ENCODE measurements at regions of chr6 and their contacts with region 1.

Region 1: GRCh38 chr6:134174672-134175198 is 122.3 kb upstream of the SLC2A12 start:
- DNase-seq: peak; percentile 97 to 98 (median 97)
- ATAC-seq: peak; percentile 73 to 90 (median 84)
- H3K4me3 ChIP-seq: peak overlapping the region; percentile 78 to 93 (median 83)
- H3K27ac ChIP-seq: peak overlapping the region; percentile 98 to 99 (median 98)
- H3K4me1 ChIP-seq: peaks cover 0 to 43% (median 14%) of the 10 kb centered on the region in 4 donors
- H3K27me3 ChIP-seq: no peaks in the 10 kb centered on the region
- CTCF ChIP-seq: peak in 1 of 4 donors; percentile 13
- POLR2A ChIP-seq: peak; percentile 99

Region 2: DNA sequence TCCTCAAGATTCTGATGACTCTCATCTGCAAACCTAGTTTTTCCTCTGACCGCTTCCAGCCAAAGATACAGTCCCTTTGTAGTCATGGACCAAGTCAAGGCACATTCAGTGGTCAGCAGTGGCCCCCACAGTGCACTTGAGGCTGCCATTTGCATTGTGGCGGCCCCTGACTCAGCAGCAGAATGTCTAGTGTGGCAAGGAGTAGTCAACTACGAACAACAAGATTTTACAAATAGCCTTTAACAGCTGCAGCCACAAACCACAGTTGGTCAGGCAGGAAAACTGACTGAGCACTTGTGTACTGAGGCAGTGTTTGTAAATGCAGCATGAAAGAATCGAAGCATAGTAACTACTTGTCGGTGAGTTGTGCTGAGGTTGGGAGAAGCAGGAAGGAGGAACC is 171.9 kb before region 1 on chr6:
- intact Hi-C with region 1: no loop called
- DNase-seq: no peak
- ATAC-seq: no peak
- H3K4me3 ChIP-seq: no peak overlapping the region
- H3K27ac ChIP-seq: no peak overlapping the region
- H3K4me1 ChIP-seq: peaks cover 0 to 33% (median 6%) of the 10 kb centered on the region in 4 donors
- H3K27me3 ChIP-seq: no peaks in the 10 kb centered on the region
- CTCF ChIP-seq: no peak
- POLR2A ChIP-seq: no peak

Region 3: GRCh38 chr6:134517145-134517658 is 342.5 kb after region 1 on chr6:
- intact Hi-C with region 1: loop called in 1 of 2 experiments (anchors 10 kb)
- DNase-seq: peak; percentile 92 to 94 (median 94)
- ATAC-seq: peak; percentile 76 to 89 (median 84)
- H3K4me3 ChIP-seq: no peak overlapping the region
- H3K27ac ChIP-seq: peak overlapping the region; percentile 66 to 87 (median 74)
- H3K4me1 ChIP-seq: peaks cover 0 to 39% (median 19%) of the 10 kb centered on the region in 4 donors
- H3K27me3 ChIP-seq: no peaks in the 10 kb centered on the region
- CTCF ChIP-seq: no peak
- POLR2A ChIP-seq: peak; percentile 60

Region 4: DNA sequence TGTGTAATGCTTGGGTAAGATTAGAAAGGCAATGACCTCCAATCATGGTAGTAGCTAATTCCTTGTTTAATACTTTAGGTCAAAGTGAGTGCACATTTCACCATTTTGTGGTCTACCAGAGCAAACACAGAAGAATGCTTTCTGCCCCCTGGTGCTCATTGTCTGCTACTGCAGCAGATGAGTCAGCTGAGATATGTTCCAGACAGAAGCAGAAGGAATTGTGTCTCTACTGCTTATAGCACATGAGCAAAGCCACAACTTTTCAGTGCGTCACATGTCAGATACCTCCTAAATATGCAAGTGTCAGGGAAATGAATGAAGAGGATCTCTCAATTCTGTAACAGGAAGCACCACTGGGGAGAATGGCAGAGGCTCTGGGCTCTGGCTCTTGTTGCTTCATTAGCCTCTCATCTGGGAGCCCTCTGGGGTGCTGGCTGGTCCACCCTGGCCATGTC is 466.3 kb after region 1 on chr6:
- intact Hi-C with region 1: loop called in 1 of 2 experiments (anchors 10 kb)
- DNase-seq: peak; percentile 57 to 79 (median 66)
- ATAC-seq: peak; percentile 95 to 98 (median 96)
- H3K4me3 ChIP-seq: no peak overlapping the region
- H3K27ac ChIP-seq: no peak overlapping the region
- H3K4me1 ChIP-seq: peaks cover 0 to 11% (median 3%) of the 10 kb centered on the region in 4 donors
- H3K27me3 ChIP-seq: no peaks in the 10 kb centered on the region
- CTCF ChIP-seq: peak; percentile 93 to 99 (median 96)
- POLR2A ChIP-seq: no peak

Measured in right lobe of liver (tissue), 6 donors.